ENCODE measurements at regions of chr13 and their contacts with region 1.

Region 1: GRCh38 chr13:105464249-105464648 is 1071.2 kb downstream of the EFNB2 start:
- DNase-seq: no peak
- ATAC-seq: no peak
- H3K4me3 ChIP-seq: no peak overlapping the region
- H3K27ac ChIP-seq: no peak overlapping the region
- H3K4me1 ChIP-seq: no peaks in the 10 kb centered on the region
- H3K27me3 ChIP-seq: no peaks in the 10 kb centered on the region
- CTCF ChIP-seq: no peak

Region 2: DNA sequence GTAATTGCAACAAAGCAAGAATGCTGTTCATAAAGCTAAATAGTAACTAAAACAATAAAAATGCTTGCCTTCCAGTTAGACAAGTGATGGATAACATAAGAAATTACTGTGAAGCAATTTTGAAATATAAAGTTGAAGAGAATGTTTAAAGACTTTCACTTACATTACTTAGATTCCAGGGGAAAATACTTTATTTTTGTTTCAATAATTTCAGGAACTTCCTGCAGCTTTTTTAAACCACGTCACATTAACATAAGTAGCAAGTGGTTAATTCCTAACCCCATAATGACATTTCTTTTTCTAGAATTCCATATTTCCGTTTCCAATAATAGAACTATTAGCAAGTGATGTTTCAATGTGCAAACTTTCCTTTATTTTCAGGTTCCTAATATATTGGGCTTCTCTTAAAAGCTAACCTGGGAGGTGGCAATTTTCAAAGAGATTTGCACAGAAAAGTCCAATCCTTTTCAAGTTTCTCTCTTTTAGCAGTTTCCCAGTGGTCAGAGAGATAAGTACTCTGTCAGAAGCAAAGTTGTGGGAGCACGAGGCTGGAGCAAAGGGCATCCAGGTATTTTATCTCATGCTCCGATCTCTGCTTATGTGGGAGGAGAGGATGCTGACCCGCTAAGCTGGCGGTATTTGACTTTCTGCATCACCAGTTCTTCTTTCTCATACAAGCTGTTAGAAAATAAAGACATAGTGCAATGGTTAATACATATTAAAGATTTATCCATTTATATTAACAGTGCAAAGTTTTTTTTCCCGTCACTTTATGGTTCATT is 45.9 kb after region 1 on chr13:
- intact Hi-C with region 1: loop called in 1 of 10 experiments (anchors 2 kb)
- DNase-seq: no peak
- ATAC-seq: no peak
- H3K4me3 ChIP-seq: no peak overlapping the region
- H3K27ac ChIP-seq: no peak overlapping the region
- H3K4me1 ChIP-seq: no peaks in the 10 kb centered on the region
- H3K27me3 ChIP-seq: no peaks in the 10 kb centered on the region
- CTCF ChIP-seq: no peak

Region 3: GRCh38 chr13:105721016-105721415 is 256.8 kb after region 1 on chr13:
- intact Hi-C with region 1: no loop called
- DNase-seq: no peak
- ATAC-seq: no peak
- H3K4me3 ChIP-seq: no peak overlapping the region
- H3K27ac ChIP-seq: no peak overlapping the region
- H3K4me1 ChIP-seq: no peaks in the 10 kb centered on the region
- H3K27me3 ChIP-seq: peaks cover 0 to 3% (median 0%) of the 10 kb centered on the region in 7 donors
- CTCF ChIP-seq: no peak